Colonic mucosa (tissue), 4 donors: ENCODE measurements at regions of chr3 and their contacts with region 1.

Region 1: GRCh38 chr3:150220799-150221198 is 187.3 kb upstream of the TSC22D2 start:
- DNase-seq: no peak
- H3K4me3 ChIP-seq: peak overlapping the region; percentile 8
- H3K27ac ChIP-seq: no peak overlapping the region
- H3K4me1 ChIP-seq: no peaks in the 10 kb centered on the region
- H3K27me3 ChIP-seq: no peaks in the 10 kb centered on the region
- CTCF ChIP-seq: no peak

Region 2: DNA sequence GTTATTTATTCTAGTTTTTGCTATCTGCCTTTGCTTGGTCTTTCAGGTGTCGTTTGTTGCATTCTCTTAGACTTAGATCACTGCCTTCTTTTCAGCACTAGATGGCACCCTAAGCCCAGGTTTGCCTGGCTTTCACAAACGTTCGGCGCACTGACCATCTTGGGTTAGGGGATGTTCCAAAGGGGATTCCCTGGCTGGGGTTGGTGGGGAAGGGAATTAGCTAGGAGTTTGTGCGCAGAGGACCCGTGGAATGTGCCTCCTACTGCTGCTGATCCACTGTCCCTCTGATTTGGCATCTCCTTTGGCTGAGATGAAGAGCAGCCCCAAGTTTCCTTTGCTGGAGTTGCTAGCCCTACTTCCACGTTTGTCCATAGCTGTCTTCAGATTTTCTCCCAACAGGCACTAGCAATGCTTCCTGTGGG is 284.0 kb before region 1 on chr3:
- intact Hi-C with region 1: loop called (anchors 2 kb)
- DNase-seq: peak; percentile 46
- H3K4me3 ChIP-seq: no peak overlapping the region
- H3K27ac ChIP-seq: no peak overlapping the region
- H3K4me1 ChIP-seq: no peaks in the 10 kb centered on the region
- H3K27me3 ChIP-seq: no peaks in the 10 kb centered on the region
- CTCF ChIP-seq: peak; percentile 60

Region 3: DNA sequence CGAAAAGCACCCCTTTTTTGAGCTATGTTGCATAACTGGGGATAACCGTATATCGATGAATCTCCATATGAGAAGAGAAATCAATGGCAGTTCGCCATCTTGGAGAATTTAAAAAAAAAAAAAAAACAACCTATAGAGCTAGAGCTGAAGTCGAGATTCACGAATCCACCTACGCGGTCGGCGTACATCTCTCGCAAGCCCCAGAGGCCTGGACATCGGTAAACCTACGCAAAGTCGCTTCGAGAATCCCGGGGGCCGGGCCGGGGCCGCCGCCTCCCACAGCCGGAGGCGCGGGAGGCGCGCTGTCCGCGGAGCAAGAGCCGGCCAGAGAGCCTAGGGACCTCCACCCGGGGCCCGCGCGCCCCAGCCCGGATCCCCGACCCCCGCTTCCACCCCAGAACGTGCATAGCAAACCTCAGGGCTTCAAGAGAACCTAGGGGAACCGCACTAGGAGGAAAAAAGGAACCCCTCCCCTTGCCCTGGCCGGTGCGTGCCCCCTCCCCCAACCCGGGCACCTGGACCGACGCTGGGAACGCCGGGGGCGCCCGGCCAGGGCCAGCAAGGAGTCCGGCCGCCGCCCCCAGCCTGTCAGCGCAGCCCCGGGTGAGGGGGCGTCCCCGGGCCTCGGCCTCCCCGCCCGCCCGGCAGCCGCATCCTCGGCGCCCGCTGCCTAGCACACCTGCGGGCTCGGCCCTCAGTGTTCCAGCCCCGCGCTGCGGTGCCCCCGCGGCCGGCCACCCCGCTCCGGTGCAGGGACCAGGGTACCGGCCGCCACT is 250.7 kb before region 1 on chr3:
- intact Hi-C with region 1: loop called (anchors 5 kb)
- DNase-seq: peak; percentile 88
- H3K4me3 ChIP-seq: peak overlapping the region; percentile 82
- H3K27ac ChIP-seq: peak overlapping the region; percentile 81
- H3K4me1 ChIP-seq: no peaks in the 10 kb centered on the region
- H3K27me3 ChIP-seq: no peaks in the 10 kb centered on the region
- CTCF ChIP-seq: no peak

Region 4: GRCh38 chr3:150556792-150557191 is 336.0 kb after region 1 on chr3:
- intact Hi-C with region 1: no loop called
- DNase-seq: no peak
- H3K4me3 ChIP-seq: no peak overlapping the region
- H3K27ac ChIP-seq: no peak overlapping the region
- H3K4me1 ChIP-seq: no peaks in the 10 kb centered on the region
- H3K27me3 ChIP-seq: no peaks in the 10 kb centered on the region
- CTCF ChIP-seq: no peak